GM13976 (cell line): ENCODE measurements at regions of chr22 and their contacts with region 1.

Region 1: DNA sequence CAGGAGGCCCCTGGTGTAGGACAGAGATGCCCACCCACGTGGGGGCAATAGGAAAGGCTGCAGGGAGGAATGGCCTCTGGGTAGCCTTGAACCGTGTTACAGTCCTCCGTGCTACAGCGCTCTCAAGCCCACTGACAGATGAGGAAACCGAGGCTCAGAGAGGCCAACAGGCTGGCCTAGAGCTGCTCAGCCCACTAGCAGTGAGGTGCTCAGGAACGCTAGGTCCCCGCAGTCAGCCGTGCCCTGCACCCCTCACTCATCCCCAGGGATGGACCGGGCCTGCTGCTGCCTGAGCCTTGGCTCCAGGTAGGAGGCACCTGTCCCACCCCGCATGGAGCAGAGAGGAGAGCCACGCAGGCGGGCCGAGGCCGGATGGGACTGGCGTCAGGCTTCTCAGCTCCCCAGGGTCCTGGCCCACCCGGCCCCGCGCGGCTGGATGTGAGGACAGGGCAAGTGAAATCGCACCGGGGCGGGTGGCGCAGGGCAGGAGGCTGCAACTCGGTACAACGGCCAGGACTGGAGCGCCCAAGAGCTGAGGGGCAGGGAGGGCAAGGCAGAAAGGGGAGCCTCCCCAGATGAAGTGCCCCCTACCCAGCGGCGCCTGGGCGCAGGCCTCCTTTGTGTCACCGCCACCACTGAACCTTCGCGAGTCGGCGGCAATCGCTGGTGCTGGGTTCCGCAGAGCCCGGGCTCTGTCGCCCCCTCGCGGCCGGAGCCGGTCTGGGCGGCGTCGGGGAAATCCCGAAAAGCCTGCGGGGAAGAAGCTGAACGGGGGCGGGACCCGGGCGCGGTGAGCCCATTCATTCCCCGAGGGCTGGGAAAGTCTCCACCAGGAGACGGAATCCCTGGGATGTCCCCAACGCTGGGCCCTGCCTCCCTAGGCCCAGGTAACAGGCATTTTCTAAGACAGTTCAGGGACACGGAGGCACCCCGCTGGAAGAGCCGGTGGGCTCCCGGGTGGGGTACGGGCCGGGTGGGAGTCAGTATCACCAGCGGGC is 8.4 kb upstream of the SLC2A11 start:
- DNase-seq: peak; percentile 92
- CTCF ChIP-seq: peak; percentile 96

Region 2: GRCh38 chr22:23542933-23543332 is 306.4 kb before region 1 on chr22:
- in situ Hi-C with region 1: loop called (anchors 10 kb)
- DNase-seq: no peak
- CTCF ChIP-seq: no peak